ENCODE measurements at regions of chr12 and their contacts with region 1.

Region 1: GRCh38 chr12:116236148-116236731 is 41.3 kb downstream of the MED13L start:
- DNase-seq: peak; percentile 60
- H3K4me3 Mint-ChIP-seq: no peak overlapping the region
- H3K27ac Mint-ChIP-seq: peak overlapping the region; percentile 33
- H3K4me1 Mint-ChIP-seq: peaks cover 23% of the 10 kb centered on the region
- H3K27me3 Mint-ChIP-seq: no peaks in the 10 kb centered on the region

Region 2: GRCh38 chr12:116142936-116143898 is 93.0 kb before region 1 on chr12:
- CTCF ChIA-PET with region 1: interaction called, 12 read pairs
- POLR2A ChIA-PET with region 1: no interaction called
- DNase-seq: no peak
- H3K4me3 Mint-ChIP-seq: no peak overlapping the region
- H3K27ac Mint-ChIP-seq: peak overlapping the region; percentile 34
- H3K4me1 Mint-ChIP-seq: peaks cover 45% of the 10 kb centered on the region
- H3K27me3 Mint-ChIP-seq: no peaks in the 10 kb centered on the region

Region 3: DNA sequence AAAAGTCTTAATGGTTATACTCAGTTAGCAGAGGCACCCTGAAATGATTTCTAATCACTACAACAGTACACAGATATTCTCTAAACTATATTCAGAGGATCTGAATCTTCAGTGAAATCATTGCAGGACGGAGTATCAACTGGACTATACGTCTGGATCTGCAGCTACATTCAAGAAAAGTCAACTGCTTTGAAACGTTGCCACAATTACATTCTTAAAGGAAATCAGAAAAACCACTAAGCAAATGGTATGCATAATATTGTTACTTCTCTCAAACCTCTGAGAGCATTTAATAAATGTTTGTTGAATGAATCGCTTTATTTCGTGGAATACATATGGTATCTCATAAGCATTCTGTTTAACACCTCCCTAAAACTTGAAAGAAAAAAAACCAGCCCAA is 26.1 kb before region 1 on chr12:
- CTCF ChIA-PET with region 1: no interaction called
- POLR2A ChIA-PET with region 1: no interaction called
- DNase-seq: no peak
- H3K4me3 Mint-ChIP-seq: no peak overlapping the region
- H3K27ac Mint-ChIP-seq: no peak overlapping the region
- H3K4me1 Mint-ChIP-seq: peaks cover 18% of the 10 kb centered on the region
- H3K27me3 Mint-ChIP-seq: no peaks in the 10 kb centered on the region

Region 4: GRCh38 chr12:116222358-116222757 is 13.9 kb before region 1 on chr12:
- CTCF ChIA-PET with region 1: interaction called, 10 read pairs
- POLR2A ChIA-PET with region 1: interaction called, 3 read pairs
- DNase-seq: no peak
- H3K4me3 Mint-ChIP-seq: no peak overlapping the region
- H3K27ac Mint-ChIP-seq: no peak overlapping the region
- H3K4me1 Mint-ChIP-seq: no peaks in the 10 kb centered on the region
- H3K27me3 Mint-ChIP-seq: no peaks in the 10 kb centered on the region

Region 5: GRCh38 chr12:116642683-116643082 is 406.4 kb after region 1 on chr12:
- CTCF ChIA-PET with region 1: no interaction called
- POLR2A ChIA-PET with region 1: no interaction called
- DNase-seq: no peak
- H3K4me3 Mint-ChIP-seq: no peak overlapping the region
- H3K27ac Mint-ChIP-seq: no peak overlapping the region
- H3K4me1 Mint-ChIP-seq: peaks cover under 1% of the 10 kb centered on the region
- H3K27me3 Mint-ChIP-seq: peaks cover 5% of the 10 kb centered on the region

Measured in activated CD4-positive, alpha-beta memory T cell treated with anti-CD3 and anti-CD28 coated beads, Interleukin-2, amount 10 ng/mL, durations not matched to agents 7 days and 5 days (primary cell).